Gastrocnemius medialis (tissue), 4 donors: ENCODE measurements at regions of chr6 and their contacts with region 1.

Region 1: DNA sequence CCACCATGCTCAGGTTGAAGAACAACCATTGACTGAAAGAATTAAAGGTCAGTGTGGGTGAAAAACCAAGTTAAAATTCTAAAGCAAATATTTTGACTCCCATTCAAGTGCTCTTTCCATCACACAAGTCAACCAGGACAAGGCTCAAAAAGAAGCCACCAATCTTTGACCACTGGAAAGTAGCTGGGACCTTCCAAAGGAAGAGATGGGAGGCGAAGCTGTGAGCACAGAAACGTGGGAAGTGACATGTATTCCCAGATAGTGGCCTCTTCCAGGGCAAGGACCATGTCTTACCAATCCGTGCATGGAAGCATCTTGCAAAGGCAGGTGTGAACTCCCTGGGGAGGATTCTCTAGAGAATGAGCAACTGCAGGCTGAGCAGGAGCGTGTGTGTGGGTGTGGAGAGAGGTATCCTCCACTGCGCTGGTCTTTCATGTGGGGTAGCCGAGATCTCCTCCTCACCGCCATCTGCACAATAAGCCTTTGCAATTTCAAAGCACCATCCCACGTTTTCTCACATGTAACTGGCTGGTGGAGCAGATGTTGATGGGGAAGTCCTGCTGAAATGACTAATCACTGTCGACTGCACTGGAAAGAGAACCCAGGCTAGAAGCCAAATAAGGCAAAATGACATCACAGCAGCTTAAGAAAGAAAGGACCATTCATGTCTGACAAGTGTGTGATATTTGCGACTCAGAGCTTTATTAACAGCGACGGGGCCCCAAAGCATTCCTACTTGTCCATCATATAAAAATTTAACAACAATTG is 189.4 kb upstream of the RREB1 start:
- DNase-seq: peak in 1 of 2 donors; percentile 42
- ATAC-seq: peak in 1 of 2 donors; percentile 25
- H3K4me3 ChIP-seq: no peak overlapping the region
- H3K27ac ChIP-seq: peak overlapping the region; percentile 80 to 96 (median 89)
- H3K4me1 ChIP-seq: peaks cover 51 to 64% of the 10 kb centered on the region in 2 donors
- H3K27me3 ChIP-seq: no peaks in the 10 kb centered on the region
- CTCF ChIP-seq: no peak
- POLR2A ChIP-seq: no peak

Region 2: DNA sequence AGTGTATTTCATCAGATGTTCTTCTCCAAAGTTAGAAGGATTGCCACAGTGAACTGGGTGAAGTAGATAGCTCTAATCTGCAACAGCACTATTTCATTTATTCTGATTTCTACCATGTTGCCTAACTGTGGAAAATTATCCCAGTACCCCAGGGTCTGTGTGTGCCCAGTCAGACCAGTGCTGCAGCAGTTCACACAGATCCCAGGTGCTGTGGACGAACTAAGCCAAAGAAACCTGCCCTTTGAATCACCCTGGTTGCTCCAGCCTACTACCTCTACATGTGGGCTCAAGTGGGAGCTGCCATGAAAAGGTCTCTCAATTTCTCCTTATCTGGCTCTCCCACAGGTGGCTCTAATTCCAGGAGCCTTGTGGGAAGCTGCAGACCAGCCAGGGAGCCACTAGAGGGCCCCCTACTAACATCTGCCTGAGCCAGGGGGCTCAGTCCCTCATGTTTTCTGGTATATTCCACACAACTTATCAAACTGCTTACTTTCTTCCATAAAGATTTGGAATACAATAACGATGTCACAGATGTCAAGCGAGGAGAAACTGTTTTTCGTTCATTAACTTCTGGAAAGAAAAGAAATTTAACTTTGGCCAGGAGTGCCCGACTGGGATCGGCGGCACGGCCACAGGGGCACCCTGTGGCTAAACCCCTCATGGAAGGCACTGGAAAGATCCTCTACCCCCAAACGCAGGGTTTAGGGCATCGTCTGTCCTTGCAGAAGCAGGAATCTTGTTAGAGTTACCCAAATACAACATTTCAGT is 361.5 kb before region 1 on chr6:
- in situ Hi-C with region 1: no loop called
- intact Hi-C with region 1: no loop called
- DNase-seq: no peak
- ATAC-seq: peak in 1 of 2 donors; percentile 55
- H3K4me3 ChIP-seq: no peak overlapping the region
- H3K27ac ChIP-seq: no peak overlapping the region
- H3K4me1 ChIP-seq: no peaks in the 10 kb centered on the region
- H3K27me3 ChIP-seq: peaks cover 0 to 6% (median 0%) of the 10 kb centered on the region in 3 donors
- CTCF ChIP-seq: peak in 4 of 5 experiments; percentile 20 to 69 (median 49)
- POLR2A ChIP-seq: no peak

Region 3: GRCh38 chr6:6749702-6750491 is 168.5 kb before region 1 on chr6:
- in situ Hi-C with region 1: loop called in 2 of 4 experiments (anchors 25 kb)
- intact Hi-C with region 1: loop called (anchors 5 kb)
- DNase-seq: peak; percentile 88 to 95
- ATAC-seq: peak; percentile 63 to 78
- H3K4me3 ChIP-seq: peak overlapping the region; percentile 38 to 70 (median 56)
- H3K27ac ChIP-seq: peak overlapping the region; percentile 98 to 99 (median 98)
- H3K4me1 ChIP-seq: peaks cover 45 to 47% of the 10 kb centered on the region in 2 donors
- H3K27me3 ChIP-seq: no peaks in the 10 kb centered on the region
- CTCF ChIP-seq: no peak
- POLR2A ChIP-seq: peak; percentile 56 to 88

Region 4: GRCh38 chr6:6872459-6873356 is 45.7 kb before region 1 on chr6:
- in situ Hi-C with region 1: no loop called
- intact Hi-C with region 1: no loop called
- DNase-seq: no peak
- ATAC-seq: no peak
- H3K4me3 ChIP-seq: no peak overlapping the region
- H3K27ac ChIP-seq: no peak overlapping the region
- H3K4me1 ChIP-seq: peaks cover 0 to 2% of the 10 kb centered on the region in 2 donors
- H3K27me3 ChIP-seq: no peaks in the 10 kb centered on the region
- CTCF ChIP-seq: no peak
- POLR2A ChIP-seq: no peak

Region 5: GRCh38 chr6:6960571-6961251 is 42.3 kb after region 1 on chr6:
- in situ Hi-C with region 1: no loop called
- intact Hi-C with region 1: no loop called
- DNase-seq: no peak
- ATAC-seq: no peak
- H3K4me3 ChIP-seq: no peak overlapping the region
- H3K27ac ChIP-seq: no peak overlapping the region
- H3K4me1 ChIP-seq: no peaks in the 10 kb centered on the region
- H3K27me3 ChIP-seq: no peaks in the 10 kb centered on the region
- CTCF ChIP-seq: no peak
- POLR2A ChIP-seq: no peak